ENCODE measurements at regions of chr12 and their contacts with region 1.

Region 1: GRCh38 chr12:48189331-48190125 is 6.1 kb downstream of the CCDC184 start:
- DNase-seq: no peak
- H3K4me3 ChIP-seq: no peak overlapping the region
- CTCF ChIP-seq: peak; percentile 78

Region 2: DNA sequence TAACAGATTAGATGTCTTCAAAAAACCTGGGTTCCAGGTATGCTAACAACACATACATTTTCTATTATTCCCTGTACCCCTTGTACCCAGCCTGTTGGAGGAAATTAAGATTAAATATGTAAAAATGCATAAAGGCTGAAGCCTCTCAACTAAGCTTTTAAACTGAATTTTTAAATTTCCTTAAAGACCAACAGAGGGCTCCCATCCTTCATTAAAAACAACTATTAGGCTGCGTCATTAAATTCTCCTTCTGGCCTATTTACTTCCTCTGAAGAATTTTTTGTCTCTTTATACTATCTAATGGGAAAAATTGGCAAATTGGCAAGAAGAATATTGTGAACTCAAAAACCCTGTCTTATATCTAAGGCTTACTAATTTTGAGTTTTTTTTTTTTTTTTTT is 105.5 kb before region 1 on chr12:
- CTCF ChIA-PET with region 1: interaction called, 11 read pairs
- POLR2A ChIA-PET with region 1: no interaction called
- DNase-seq: no peak
- H3K4me3 ChIP-seq: no peak overlapping the region
- CTCF ChIP-seq: no peak

Region 3: GRCh38 chr12:48175613-48176416 is 13.7 kb before region 1 on chr12:
- CTCF ChIA-PET with region 1: interaction called, 23 read pairs
- POLR2A ChIA-PET with region 1: no interaction called
- DNase-seq: no peak
- H3K4me3 ChIP-seq: no peak overlapping the region
- CTCF ChIP-seq: no peak